Activated CD4-positive, alpha-beta T cell treated with anti-CD3 and anti-CD28 coated beads for 36 hours (primary cell): ENCODE measurements at regions of chr2 and their contacts with region 1.

Region 1: GRCh38 chr2:191114403-191114886 is 36.3 kb downstream of the STAT4 start:
- DNase-seq: peak; percentile 49
- ATAC-seq: peak; percentile 22
- H3K4me3 Mint-ChIP-seq: peak overlapping the region; percentile 30
- H3K27ac Mint-ChIP-seq: peak overlapping the region; percentile 82
- H3K4me1 Mint-ChIP-seq: peaks cover 62% of the 10 kb centered on the region
- H3K27me3 Mint-ChIP-seq: no peaks in the 10 kb centered on the region

Region 2: DNA sequence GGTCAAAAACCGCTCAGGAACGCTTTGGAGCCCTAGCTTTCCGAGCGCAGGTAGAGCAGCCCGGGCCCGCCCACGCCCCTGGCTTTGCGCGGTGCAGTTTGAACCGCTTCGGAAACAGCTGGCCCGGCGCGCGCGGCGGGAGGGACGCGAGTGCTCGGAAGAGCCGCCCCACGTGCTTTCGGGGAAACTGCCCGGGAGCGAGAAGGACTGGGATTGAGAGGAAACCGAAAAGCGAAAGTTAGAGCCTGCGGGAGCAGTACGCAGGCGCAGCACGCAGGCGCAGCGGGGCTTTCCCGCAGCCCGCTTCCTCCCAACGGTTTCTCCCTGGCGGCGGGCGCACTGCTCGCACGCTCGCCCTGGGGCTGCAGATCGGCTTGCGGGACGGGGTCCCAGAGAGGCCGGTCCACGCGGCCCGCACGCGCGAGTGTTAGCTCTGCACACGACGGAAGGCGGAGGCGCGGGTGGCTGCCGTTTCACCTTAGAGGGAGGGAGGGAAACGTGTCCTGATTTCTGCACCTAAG is 94.2 kb before region 1 on chr2:
- CTCF ChIA-PET with region 1: interaction called, 3 read pairs
- POLR2A ChIA-PET with region 1: interaction called, 8 read pairs
- intact Hi-C with region 1: loop called in 1 of 2 experiments (anchors 1 kb)
- DNase-seq: peak; percentile 96
- ATAC-seq: peak; percentile 62
- H3K4me3 Mint-ChIP-seq: no peak overlapping the region
- H3K27ac Mint-ChIP-seq: no peak overlapping the region
- H3K4me1 Mint-ChIP-seq: peaks cover 37% of the 10 kb centered on the region
- H3K27me3 Mint-ChIP-seq: no peaks in the 10 kb centered on the region

Region 3: DNA sequence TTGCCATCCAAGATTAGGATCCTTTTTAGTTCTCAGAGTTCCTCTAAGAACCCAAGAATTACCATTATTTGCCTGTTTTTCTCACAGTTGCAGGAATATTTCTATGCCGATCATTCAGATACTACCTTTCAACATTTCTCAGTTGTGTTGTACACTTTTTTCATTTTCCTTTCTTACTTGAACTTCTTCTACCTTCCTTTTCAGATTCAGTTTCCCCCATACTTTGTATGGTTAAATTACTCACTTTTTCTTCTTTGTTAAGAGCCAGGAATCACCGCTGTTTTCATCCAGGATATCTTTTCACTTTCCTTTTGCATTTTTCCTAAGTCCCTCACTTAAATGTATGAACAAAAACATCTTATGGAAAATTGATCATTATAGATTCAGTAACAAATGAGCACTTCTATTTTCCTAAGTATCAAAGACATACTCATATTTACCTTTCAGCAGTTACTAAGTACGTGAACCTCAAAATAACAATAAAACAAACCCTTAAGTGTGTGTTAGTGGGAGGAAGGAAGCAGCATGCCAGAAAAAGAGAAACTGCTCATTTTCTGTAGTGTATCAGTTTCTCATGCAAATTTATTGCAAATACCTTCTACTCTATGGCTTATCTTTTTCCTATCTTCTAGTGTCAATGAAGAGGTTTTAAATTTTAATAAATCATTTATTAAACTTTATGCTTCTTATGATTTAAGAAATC is 36.1 kb before region 1 on chr2:
- CTCF ChIA-PET with region 1: no interaction called
- POLR2A ChIA-PET with region 1: no interaction called
- intact Hi-C with region 1: loop called (anchors 1 to 2 kb)
- DNase-seq: no peak
- ATAC-seq: peak; percentile 81
- H3K4me3 Mint-ChIP-seq: peak overlapping the region; percentile 64
- H3K27ac Mint-ChIP-seq: peak overlapping the region; percentile 83
- H3K4me1 Mint-ChIP-seq: peaks cover 20% of the 10 kb centered on the region
- H3K27me3 Mint-ChIP-seq: no peaks in the 10 kb centered on the region

Region 4: GRCh38 chr2:191189112-191189635 is 74.7 kb after region 1 on chr2:
- CTCF ChIA-PET with region 1: interaction called, 4 read pairs
- POLR2A ChIA-PET with region 1: interaction called, 3 read pairs
- intact Hi-C with region 1: loop called (anchors 1 to 2 kb)
- DNase-seq: no peak
- ATAC-seq: no peak
- H3K4me3 Mint-ChIP-seq: peak overlapping the region; percentile 19
- H3K27ac Mint-ChIP-seq: peak overlapping the region; percentile 68
- H3K4me1 Mint-ChIP-seq: peaks cover 63% of the 10 kb centered on the region
- H3K27me3 Mint-ChIP-seq: no peaks in the 10 kb centered on the region